A673 (cell line): ENCODE measurements at regions of chr4 and their contacts with region 1.

Region 1: GRCh38 chr4:1862055-1862926 is 6.3 kb upstream of the LETM1 start:
- DNase-seq: no peak
- H3K4me3 ChIP-seq: no peak overlapping the region
- H3K27ac ChIP-seq: no peak overlapping the region
- H3K4me1 ChIP-seq: peaks cover 13% of the 10 kb centered on the region
- H3K27me3 ChIP-seq: no peaks in the 10 kb centered on the region
- CTCF ChIP-seq: no peak

Region 2: GRCh38 chr4:1712216-1713002 is 149.9 kb before region 1 on chr4 and contains the start of gene SLBP:
- CTCF ChIA-PET with region 1: interaction called, 13 read pairs
- POLR2A ChIA-PET with region 1: no interaction called
- intact Hi-C with region 1: no loop called
- DNase-seq: peak; percentile 98
- H3K4me3 ChIP-seq: peak within 1 kb of the TSS; percentile 85
- H3K27ac ChIP-seq: peak within 1 kb of the TSS; percentile 100
- H3K4me1 ChIP-seq: peaks cover 24% of the 10 kb centered on the region
- H3K27me3 ChIP-seq: no peaks in the 10 kb centered on the region
- CTCF ChIP-seq: no peak
- total RNA-seq, gene SLBP: 85.5 and 89.5 TPM in 2 replicates

Region 3: DNA sequence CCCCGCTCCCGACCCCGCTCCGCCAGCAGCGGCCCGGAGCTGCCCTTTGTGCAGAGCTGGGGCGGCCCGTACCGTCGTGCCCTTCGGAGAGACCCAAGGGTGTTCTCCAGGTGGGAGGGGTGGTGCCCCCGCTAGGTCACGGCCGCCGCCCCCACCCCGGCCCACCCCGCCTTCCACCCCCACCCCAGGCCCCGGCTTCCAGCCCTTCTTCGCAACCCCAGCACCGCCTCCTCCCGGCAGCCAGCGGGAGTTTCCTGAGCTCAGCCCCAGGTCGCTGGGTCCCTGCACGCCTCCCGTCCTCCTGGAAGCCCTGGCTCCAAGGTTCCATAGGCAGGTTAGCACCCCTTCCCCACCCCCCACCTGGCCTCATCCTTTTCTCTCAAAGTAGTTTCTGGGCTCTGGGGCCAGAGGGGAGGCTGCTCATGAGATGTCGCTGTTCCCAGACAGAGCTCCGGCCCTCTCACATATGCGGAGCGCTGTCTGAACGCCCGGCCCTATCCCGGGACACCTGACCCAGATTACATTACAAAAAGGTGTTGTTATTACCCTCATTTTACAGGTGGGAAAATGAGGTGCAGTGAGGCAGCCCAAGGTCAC is 94.4 kb before region 1 on chr4:
- CTCF ChIA-PET with region 1: no interaction called
- POLR2A ChIA-PET with region 1: interaction called, 11 read pairs
- intact Hi-C with region 1: no loop called
- DNase-seq: peak; percentile 71
- H3K4me3 ChIP-seq: peak overlapping the region; percentile 32
- H3K27ac ChIP-seq: no peak overlapping the region
- H3K4me1 ChIP-seq: peaks cover 18% of the 10 kb centered on the region
- H3K27me3 ChIP-seq: no peaks in the 10 kb centered on the region
- CTCF ChIP-seq: peak; percentile 45; the same call in 1 of the 2 replicates

Region 4: DNA sequence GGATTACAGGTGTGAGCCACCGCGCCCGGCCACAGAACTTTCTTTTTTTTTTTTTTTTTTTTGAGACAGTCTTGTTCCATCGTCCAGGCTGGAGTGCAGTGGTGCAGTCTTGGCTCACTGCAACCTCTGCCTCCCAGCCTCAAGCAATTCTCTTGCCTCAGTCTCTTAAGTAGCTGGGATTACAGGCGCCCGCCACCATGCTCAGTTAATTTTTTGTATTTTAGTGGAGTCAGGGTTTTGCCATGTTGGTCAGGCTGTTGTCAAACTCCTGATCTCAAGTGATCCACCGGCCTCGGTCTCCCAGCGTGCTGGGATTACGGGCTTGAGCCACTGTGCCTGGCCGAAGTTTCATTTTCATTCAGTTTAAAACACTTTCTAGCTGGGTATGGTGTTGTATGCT is 690.5 kb after region 1 on chr4:
- CTCF ChIA-PET with region 1: no interaction called
- POLR2A ChIA-PET with region 1: no interaction called
- intact Hi-C with region 1: no loop called
- DNase-seq: no peak
- H3K4me3 ChIP-seq: no peak overlapping the region
- H3K27ac ChIP-seq: no peak overlapping the region
- H3K4me1 ChIP-seq: no peaks in the 10 kb centered on the region
- H3K27me3 ChIP-seq: no peaks in the 10 kb centered on the region
- CTCF ChIP-seq: no peak